ENCODE measurements at regions of chr6 and their contacts with region 1.

Region 1: DNA sequence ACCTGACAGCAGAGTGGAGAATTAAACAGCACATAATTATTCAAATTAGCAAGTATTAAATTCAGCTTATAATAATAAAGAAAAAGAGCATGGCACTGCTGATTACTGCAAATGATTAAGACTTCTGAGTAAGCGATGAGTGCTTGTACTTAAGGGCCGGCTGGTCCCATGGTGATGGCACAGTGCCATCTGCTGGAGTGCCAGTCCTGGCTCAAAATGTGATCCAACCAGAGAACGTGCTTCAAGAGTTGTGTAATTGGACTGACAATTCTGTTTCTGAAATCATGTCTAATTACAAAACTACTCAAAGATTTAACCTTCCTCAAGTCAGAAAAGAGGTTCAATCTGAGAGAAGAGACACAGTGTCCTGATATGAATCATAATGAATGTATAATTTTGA is 181.6 kb upstream of the RGS17 start:
- DNase-seq: peak; percentile 69
- ATAC-seq: peak; percentile 65
- H3K4me3 ChIP-seq: no peak overlapping the region
- H3K27ac ChIP-seq: no peak overlapping the region
- H3K4me1 ChIP-seq: no peaks in the 10 kb centered on the region
- H3K27me3 ChIP-seq: peaks cover 28% of the 10 kb centered on the region
- CTCF ChIP-seq: peak; percentile 63

Region 2: GRCh38 chr6:152863618-152864326 is 448.9 kb before region 1 on chr6:
- CTCF ChIA-PET with region 1: no interaction called
- POLR2A ChIA-PET with region 1: no interaction called
- intact Hi-C with region 1: loop called (anchors 10 kb)
- DNase-seq: peak; percentile 74
- ATAC-seq: peak; percentile 90
- H3K4me3 ChIP-seq: no peak overlapping the region
- H3K27ac ChIP-seq: no peak overlapping the region
- H3K4me1 ChIP-seq: no peaks in the 10 kb centered on the region
- H3K27me3 ChIP-seq: peaks cover 58% of the 10 kb centered on the region
- CTCF ChIP-seq: peak; percentile 75

Region 3: GRCh38 chr6:152948150-152948768 is 364.4 kb before region 1 on chr6:
- CTCF ChIA-PET with region 1: interaction called, 5 read pairs
- POLR2A ChIA-PET with region 1: no interaction called
- intact Hi-C with region 1: loop called (anchors 2 kb)
- DNase-seq: peak; percentile 66
- ATAC-seq: peak; percentile 54
- H3K4me3 ChIP-seq: peak overlapping the region; percentile 59; the same call in 1 of the 2 replicates
- H3K27ac ChIP-seq: no peak overlapping the region
- H3K4me1 ChIP-seq: peaks cover 52% of the 10 kb centered on the region
- H3K27me3 ChIP-seq: no peaks in the 10 kb centered on the region; the same call in 1 of the 2 replicates
- CTCF ChIP-seq: peak; percentile 83

Region 4: DNA sequence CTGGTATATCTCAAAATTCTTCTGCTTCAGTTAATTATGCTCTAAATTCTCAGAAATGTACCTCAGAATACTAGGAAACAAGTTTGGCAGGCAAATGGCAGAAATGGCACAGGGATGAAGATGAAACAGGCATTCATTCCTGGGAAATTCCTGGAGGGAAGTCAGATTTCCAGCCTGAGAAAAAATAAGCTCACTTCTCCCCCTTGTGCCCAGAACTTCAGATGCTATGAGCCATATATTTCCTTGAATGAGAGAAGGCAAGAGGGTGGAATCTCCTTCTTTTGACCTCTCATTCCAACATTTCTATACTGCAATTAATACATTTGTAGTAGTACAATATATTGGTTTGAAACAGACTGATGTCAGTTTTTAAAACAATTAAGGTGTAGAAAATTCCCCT is 204.3 kb before region 1 on chr6:
- CTCF ChIA-PET with region 1: no interaction called
- POLR2A ChIA-PET with region 1: no interaction called
- intact Hi-C with region 1: loop called (anchors 5 kb)
- DNase-seq: peak; percentile 50
- ATAC-seq: peak; percentile 45; the same call in 1 of the 2 replicates
- H3K4me3 ChIP-seq: no peak overlapping the region
- H3K27ac ChIP-seq: no peak overlapping the region
- H3K4me1 ChIP-seq: no peaks in the 10 kb centered on the region
- H3K27me3 ChIP-seq: no peaks in the 10 kb centered on the region
- CTCF ChIP-seq: peak; percentile 64